Cardiac septum (tissue), 1 donor: ENCODE measurements at regions of chr2 and their contacts with region 1.

Region 1: GRCh38 chr2:133993160-133993559 is 260.7 kb upstream of the MGAT5 start:
- DNase-seq: no peak

Region 2: DNA sequence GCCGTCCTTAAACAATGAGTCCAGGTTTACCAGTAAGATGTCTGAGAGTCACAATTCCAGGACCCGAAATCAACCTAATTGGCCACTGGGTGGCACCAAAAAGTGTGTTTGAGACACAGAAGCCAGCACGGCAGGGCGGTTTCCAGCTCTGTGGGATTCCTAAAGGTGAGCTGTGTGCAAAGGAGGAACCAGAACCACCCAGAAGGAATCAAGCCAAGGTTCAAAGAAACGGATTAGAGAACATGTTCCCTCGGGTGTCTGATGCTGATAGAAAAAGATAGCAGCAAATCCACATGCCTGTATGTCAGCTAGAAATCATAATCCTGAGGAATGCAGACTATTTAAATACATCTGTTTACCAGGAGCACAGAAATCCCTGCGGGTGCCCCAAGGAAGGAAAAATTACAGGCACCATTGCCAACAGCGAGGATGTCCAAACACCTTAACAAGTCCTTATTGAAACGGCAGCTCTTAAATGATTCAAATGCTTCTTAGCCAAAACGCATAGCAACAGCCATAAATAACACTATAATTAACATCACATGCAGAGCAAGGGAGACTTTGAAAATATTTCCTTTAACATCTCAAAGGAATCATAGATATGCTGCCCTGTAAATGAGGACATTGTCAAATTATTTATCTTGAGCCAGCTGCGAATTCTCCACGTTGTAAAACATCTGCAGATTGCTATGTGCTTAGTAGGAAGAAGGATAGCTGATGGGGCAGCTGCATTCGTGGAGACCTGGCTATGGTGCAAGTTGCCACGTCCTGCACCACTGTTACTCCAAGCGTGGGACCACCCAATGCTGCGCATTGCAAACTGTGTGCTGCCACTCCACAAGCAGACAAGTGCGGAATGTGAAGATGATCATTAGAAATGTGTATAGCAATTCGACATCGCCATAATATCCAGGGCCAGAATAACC is 106.2 kb before region 1 on chr2:
- intact Hi-C with region 1: loop called (anchors 5 kb)
- DNase-seq: peak; percentile 83

Region 3: DNA sequence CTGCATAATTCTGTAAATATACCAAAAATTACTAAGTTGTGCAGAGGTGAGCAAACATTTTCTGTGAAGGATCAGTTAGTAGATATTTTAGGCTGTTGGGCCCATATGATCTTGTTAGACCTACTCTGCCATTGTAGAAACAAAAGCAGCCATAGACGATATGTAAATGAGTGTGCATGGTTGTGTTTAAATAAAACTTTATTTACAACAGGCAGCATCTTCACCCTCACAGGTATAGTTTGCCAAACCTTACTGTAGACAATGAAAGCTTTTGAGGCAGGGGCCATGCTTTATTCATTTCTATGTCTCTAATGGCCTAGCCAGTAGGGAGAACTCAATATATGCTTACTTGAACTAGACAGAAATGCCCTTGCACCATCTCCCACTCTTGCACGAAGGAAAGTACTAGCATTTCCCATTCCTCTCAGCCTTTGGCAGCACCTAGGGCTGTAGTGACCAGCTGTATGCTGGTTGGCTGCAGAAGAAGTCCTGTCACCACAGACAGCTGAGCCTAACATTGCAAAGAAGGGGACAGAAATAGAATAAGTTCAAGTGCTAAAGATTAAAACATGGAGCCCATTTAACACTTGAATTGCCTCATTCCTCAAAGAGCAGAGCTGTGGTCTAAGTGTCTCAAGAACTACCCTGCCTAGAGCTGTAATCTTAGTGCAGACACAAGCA is 44.4 kb before region 1 on chr2:
- intact Hi-C with region 1: loop called (anchors 5 kb)
- DNase-seq: no peak